ENCODE measurements at regions of chr20 and their contacts with region 1.

Region 1: DNA sequence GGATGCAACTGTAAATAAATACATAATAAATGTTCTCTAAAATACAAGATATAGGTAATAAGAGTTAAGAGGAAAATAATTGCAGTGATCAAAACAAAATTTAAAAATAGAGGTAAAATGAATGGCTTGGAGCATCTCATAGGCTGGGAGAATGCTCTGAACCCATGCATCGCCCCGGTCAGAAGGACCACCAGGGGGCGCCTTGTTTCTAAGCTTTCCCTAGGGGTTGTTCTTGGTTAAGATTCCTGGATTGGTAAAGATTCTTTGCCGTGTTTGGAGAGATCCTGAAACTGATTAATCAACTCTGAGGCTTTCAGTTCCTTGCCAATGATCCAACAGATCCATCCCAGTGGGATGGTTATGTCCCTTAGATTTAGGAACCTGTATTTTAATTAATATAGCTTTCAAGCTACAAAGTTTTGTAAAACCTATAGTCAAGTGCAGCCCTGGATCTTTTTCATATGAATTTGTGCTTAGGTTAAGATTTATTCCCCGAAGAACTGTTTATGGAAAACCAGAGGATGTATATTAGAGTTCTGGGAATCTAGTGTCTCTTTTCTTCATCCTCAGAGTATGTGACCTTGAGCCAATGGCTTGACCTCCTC is 45.3 kb upstream of the PRELID3B start:
- DNase-seq: no peak
- H3K4me3 ChIP-seq: no peak overlapping the region
- H3K27ac ChIP-seq: no peak overlapping the region
- H3K27me3 ChIP-seq: peaks cover 13% of the 10 kb centered on the region
- CTCF ChIP-seq: peak; percentile 90

Region 2: DNA sequence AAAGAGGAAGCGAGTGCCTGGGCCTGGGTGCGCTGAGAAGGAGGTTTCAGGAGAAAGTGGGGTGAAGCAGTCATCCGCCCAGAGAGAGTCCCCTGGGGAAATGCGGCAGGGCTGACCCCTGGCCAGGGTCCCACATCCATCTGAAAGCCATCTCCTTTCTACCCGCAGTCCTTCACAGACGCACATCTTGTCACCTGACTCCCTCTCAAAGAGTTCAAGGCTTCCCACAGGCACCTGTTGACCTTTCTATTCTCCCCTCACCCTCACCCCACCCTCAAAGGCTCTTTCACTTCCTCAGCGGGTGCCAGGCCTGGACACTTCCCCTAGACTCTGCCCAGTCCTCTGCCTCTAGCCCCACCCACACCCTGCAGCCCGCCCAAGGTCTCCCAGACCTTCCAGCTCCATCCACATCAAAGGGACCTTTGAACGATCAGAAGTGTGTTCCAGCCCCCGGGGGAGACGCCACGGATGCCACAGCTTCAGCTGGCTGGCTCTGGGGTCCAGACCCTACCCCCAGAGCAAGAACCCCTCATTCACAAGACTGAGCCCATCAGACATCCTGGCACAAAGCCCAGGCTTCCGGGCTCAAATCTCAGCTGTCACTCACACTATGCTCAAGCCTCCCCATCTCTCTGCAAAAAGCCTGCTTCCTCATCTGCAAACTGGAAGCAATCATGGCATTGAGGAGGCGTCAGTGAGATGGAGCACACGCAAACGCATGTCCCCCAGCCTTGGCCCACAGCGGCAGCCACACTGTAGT is 83.0 kb before region 1 on chr20:
- CTCF ChIA-PET with region 1: no interaction called
- POLR2A ChIA-PET with region 1: no interaction called
- DNase-seq: no peak
- H3K4me3 ChIP-seq: peak overlapping the region; percentile 13; the same call in 1 of the 2 replicates
- H3K27ac ChIP-seq: no peak overlapping the region
- H3K27me3 ChIP-seq: no peaks in the 10 kb centered on the region
- CTCF ChIP-seq: no peak

Region 3: DNA sequence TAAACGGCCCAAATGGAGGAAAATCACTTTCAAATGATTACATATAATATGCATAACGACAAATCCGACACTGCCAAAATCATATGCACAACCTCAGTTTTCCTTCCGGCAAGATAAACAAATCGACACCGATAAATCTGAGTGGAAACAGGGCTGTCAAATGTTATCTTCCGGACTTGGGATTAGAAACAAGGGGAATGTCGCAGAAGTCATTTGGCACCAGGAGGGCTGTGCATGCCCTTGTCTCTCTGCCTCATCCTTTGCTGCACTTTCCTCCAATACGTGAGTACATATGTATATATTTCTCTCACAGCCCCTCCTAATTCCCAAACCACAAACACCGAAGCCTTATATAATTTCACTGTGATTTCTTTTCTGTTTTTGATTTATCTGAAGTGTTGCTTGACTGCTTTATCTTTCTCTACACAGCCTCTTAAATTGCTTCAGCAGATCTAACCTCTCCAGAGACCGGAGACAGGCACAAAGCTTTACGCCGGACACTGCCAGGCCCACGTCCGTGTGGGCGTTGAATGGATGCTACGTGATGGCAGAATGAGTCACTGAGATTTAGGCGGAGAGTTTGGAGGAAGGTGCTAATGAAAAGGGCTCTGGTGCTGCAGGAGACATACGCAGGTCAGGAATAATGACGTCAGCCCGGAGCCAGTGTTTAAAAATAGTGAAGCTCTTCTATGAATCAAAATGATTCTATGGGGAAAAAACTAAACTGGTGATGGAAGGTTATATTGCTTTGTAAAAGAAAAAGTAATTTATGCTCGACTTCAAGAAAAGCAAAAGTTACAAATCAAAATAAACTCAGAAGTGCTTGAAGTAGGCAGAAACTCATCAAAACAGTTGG is 24.3 kb before region 1 on chr20:
- CTCF ChIA-PET with region 1: interaction called, 17 read pairs
- POLR2A ChIA-PET with region 1: no interaction called
- DNase-seq: peak; percentile 38
- H3K4me3 ChIP-seq: peak overlapping the region; percentile 41
- H3K27ac ChIP-seq: no peak overlapping the region
- H3K27me3 ChIP-seq: peaks cover 9% of the 10 kb centered on the region
- CTCF ChIP-seq: no peak

Region 4: DNA sequence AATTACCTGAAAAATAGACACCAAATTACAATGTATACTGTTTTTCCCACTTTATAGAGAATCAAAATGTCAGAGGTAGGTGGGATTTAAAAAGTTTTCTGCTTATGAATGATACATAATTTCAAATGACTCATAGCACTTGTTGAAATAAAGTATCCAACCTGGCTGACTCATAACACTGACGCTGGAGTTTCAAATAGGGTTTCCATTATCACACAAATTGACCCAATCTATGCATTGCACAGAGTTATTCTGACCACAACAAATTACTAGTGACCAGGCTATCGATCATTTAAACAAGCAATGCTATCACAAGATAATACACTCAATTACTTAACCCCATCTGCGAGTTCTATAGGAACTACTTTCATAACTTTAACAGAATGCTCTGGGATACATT is 13.5 kb before region 1 on chr20:
- CTCF ChIA-PET with region 1: interaction called, 15 read pairs
- POLR2A ChIA-PET with region 1: interaction called, 3 read pairs
- DNase-seq: no peak
- H3K4me3 ChIP-seq: no peak overlapping the region
- H3K27ac ChIP-seq: no peak overlapping the region
- H3K27me3 ChIP-seq: peaks cover 27% of the 10 kb centered on the region
- CTCF ChIP-seq: no peak

Region 5: DNA sequence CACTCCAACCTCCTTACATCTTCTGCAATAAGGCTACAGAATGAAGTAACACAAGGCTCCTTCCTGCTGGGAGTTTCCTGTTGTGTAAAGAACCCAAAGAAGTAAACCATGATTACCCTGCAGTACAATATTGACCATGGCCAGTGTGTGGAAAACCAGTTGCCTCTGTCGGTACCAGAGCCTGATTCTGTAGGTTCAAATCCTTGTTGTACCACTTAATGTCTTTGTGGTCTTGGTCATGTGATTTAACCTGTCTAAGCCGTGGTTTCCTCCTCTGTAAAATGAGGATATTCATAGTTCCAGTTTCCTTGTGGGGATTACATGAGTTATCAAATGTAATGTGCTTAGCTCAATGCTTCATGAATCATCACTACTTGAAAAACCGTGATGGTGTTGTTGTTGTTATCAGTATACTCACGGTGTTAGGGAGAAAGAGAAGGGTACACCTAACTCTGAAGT is 14.9 kb after region 1 on chr20:
- CTCF ChIA-PET with region 1: interaction called, 24 read pairs
- POLR2A ChIA-PET with region 1: no interaction called
- DNase-seq: no peak
- H3K4me3 ChIP-seq: no peak overlapping the region
- H3K27ac ChIP-seq: no peak overlapping the region
- H3K27me3 ChIP-seq: peaks cover 6% of the 10 kb centered on the region
- CTCF ChIP-seq: no peak

Region 6: GRCh38 chr20:59222253-59223181 is 134.6 kb after region 1 on chr20:
- CTCF ChIA-PET with region 1: interaction called, 15 read pairs
- POLR2A ChIA-PET with region 1: no interaction called
- DNase-seq: peak; percentile 33
- H3K4me3 ChIP-seq: peak overlapping the region; percentile 55
- H3K27ac ChIP-seq: no peak overlapping the region
- H3K27me3 ChIP-seq: peaks cover 50% of the 10 kb centered on the region
- CTCF ChIP-seq: peak; percentile 97

Region 7: DNA sequence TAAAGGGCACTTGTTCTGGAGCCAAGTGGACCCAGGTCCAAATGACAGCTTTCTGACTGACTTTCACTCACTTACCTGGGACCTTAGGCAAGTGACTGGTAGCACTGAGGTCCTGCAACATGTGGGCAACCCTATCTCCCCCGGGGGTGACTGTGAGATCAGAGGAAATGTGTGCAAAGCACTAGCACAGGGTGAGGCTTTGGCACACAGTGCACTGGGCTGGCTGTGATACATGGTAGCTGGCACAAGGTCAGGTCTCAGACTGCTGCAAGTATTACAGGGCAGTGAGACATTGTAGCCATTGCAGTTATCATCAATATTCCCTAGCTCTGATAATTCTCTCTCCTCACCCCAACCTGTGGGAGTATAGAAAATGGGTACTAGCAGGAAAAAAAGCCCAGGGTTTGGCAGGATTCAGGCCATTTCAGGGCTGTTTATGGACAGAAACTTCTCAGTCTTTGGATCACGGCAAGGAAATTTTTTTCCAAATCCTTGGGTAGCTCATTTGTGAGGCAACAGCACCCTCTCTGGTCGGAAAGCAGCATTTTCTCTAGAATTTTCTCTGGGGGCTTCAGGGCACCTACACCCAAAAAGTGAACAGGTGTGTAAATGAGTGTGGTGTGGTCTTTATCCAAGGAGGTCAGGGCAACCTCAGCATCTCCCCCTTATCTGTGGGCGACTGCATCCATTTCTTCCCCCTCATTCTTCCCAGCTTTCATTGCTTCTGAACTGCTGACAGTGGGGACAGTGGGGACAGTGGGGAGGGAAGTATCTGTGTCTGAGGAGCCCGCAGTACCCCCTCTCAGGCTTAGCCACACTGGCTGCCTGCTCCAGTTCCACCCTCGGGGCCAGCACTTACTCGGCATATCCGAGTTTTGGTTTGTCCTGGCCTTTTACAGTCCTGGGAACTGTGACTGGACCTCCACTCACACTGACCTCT is 367.7 kb after region 1 on chr20:
- CTCF ChIA-PET with region 1: interaction called, 11 read pairs
- POLR2A ChIA-PET with region 1: no interaction called
- DNase-seq: no peak
- H3K4me3 ChIP-seq: no peak overlapping the region
- H3K27ac ChIP-seq: no peak overlapping the region
- H3K27me3 ChIP-seq: no peaks in the 10 kb centered on the region
- CTCF ChIP-seq: peak; percentile 54

Measured in AG04450 (cell line).